Activated T-helper 2 cell treated with anti-CD3 and anti-CD28 coated beads, Interferon-gamma antibody, Interleukin-2, Interleukin-4, amounts not matched to agents 10 μg/mL and 5 μg/mL and 100 μg/mL, durations not matched to agents 14 hours and 24 hours and 36 hours (primary cell): ENCODE measurements at regions of chr20 and their contacts with region 1.

Region 1: DNA sequence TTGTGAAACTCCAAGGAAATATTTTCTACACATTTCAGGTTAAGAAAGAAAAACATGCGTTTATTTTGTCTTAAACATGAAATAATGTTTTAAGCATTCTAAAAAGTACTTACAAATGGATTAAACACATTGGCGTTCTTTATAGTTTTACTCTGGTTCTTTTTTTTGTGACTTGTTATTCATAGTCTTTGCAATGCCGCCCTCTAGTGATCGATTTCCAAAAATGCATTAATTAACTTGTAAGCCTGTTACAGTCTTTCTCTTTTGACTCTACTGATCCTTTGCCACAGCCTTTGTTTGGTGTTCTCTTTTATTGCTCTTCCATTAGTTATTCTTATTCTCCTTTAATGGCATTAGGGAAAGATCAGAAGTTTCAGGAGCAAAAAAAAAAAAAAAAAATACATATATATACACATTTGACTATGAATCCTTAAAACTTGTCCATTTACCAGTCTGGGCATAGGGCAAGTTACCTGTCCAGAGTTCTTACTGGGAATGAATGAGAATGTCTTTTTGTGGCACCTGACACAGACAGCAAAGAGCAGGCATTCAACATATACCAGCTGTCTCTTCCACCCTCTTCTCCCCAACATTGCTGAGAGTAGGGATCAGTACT is 59.9 kb downstream of the MACROD2 start:
- DNase-seq: no peak
- H3K4me3 Mint-ChIP-seq: no peak overlapping the region
- H3K27ac Mint-ChIP-seq: no peak overlapping the region
- H3K4me1 Mint-ChIP-seq: no peaks in the 10 kb centered on the region
- H3K27me3 Mint-ChIP-seq: peaks cover 1% of the 10 kb centered on the region

Region 2: GRCh38 chr20:13819885-13820645 is 235.2 kb before region 1 on chr20:
- intact Hi-C with region 1: loop called (anchors 1 kb)
- DNase-seq: no peak
- H3K4me3 Mint-ChIP-seq: no peak overlapping the region
- H3K27ac Mint-ChIP-seq: no peak overlapping the region
- H3K4me1 Mint-ChIP-seq: peaks cover 15% of the 10 kb centered on the region
- H3K27me3 Mint-ChIP-seq: no peaks in the 10 kb centered on the region

Region 3: GRCh38 chr20:14009208-14009607 is 46.0 kb before region 1 on chr20:
- intact Hi-C with region 1: no loop called
- DNase-seq: no peak
- H3K4me3 Mint-ChIP-seq: no peak overlapping the region
- H3K27ac Mint-ChIP-seq: no peak overlapping the region
- H3K4me1 Mint-ChIP-seq: no peaks in the 10 kb centered on the region
- H3K27me3 Mint-ChIP-seq: no peaks in the 10 kb centered on the region